Left lung (tissue), 14 donors: ENCODE measurements at regions of chr1 and their contacts with region 1.

Region 1: GRCh38 chr1:19582302-19582701 is 61.8 kb upstream of the NBL1 start:
- DNase-seq: peak in 2 of 4 donors; percentile 72 to 91
- ATAC-seq: peak; percentile 98
- H3K4me3 ChIP-seq: no peak overlapping the region
- H3K27ac ChIP-seq: no peak overlapping the region
- H3K4me1 ChIP-seq: peaks cover 0 to 9% of the 10 kb centered on the region in 2 donors
- H3K27me3 ChIP-seq: no peaks in the 10 kb centered on the region
- CTCF ChIP-seq: peak; percentile 50 to 71

Region 2: GRCh38 chr1:19338323-19338762 is 244.0 kb before region 1 on chr1:
- intact Hi-C with region 1: no loop called
- DNase-seq: no peak
- ATAC-seq: peak; percentile 3
- H3K4me3 ChIP-seq: no peak overlapping the region
- H3K27ac ChIP-seq: no peak overlapping the region
- H3K4me1 ChIP-seq: no peaks in the 10 kb centered on the region
- H3K27me3 ChIP-seq: no peaks in the 10 kb centered on the region
- CTCF ChIP-seq: no peak

Region 3: DNA sequence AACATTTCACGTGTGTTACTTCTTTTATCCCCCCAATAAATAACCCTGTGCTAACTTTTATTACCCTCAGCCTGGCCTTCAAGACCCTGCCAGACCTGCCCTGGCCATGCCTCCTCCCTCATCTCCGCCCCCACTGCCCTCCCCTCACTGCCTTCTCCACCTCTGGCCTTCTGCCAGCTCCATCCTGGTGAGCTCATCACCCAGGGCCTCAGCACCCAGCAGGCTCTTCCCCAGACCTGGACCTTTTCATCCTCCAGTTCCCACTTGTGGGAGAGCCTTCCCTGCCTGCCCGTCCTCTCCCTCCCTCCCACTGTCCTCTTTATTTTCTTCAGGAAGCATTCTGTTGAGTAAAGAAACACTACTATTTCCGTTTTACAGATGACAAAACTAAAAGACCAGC is 198.2 kb before region 1 on chr1:
- intact Hi-C with region 1: loop called in 1 of 2 experiments (anchors 10 kb)
- DNase-seq: peak in 1 of 4 donors; percentile 44
- ATAC-seq: peak; percentile 6
- H3K4me3 ChIP-seq: no peak overlapping the region
- H3K27ac ChIP-seq: no peak overlapping the region
- H3K4me1 ChIP-seq: peaks cover 16 to 24% of the 10 kb centered on the region in 2 donors
- H3K27me3 ChIP-seq: no peaks in the 10 kb centered on the region
- CTCF ChIP-seq: no peak

Region 4: DNA sequence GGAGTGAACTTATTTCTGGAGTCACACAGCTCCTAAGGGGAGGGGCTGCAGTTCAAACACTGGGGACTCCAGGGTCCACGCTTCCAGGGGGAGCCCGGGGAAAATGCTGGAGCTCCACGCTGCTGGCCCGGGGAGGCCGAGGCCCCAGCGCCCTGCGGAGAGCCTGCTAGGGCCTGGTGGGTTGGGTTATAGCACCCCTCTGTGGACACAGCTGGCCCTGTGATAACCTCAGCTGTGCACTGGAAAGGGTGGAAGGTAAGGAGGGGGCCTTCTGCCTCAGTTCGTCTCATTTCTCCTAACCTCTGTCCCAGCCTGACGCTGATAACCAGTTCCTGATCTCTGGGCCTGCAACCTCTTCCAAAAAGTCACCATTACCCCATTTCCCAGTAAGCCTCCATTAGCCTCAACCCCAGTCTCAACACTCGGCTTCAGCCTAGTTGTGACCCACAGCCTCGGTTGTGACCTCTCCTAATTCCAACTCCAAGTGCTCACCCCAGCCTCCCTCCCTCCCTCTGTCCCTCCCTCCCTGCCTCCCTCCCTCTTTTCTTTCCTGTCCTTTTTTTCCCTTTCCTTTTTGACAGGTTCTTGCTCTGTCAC is 68.9 kb after region 1 on chr1:
- intact Hi-C with region 1: no loop called
- DNase-seq: peak in 2 of 4 donors; percentile 42 to 67
- ATAC-seq: peak; percentile 62
- H3K4me3 ChIP-seq: no peak overlapping the region
- H3K27ac ChIP-seq: peak overlapping the region; percentile 36 to 46
- H3K4me1 ChIP-seq: peaks cover 13 to 28% of the 10 kb centered on the region in 2 donors
- H3K27me3 ChIP-seq: peaks cover 0 to 14% of the 10 kb centered on the region in 2 donors
- CTCF ChIP-seq: peak; percentile 41 to 45